AG04449 (cell line): ENCODE measurements at regions of chr11 and their contacts with region 1.

Region 1: GRCh38 chr11:78645226-78646202 is 70.8 kb upstream of the NARS2 start:
- DNase-seq: no peak
- H3K4me3 ChIP-seq: no peak overlapping the region
- CTCF ChIP-seq: peak; percentile 91

Region 2: DNA sequence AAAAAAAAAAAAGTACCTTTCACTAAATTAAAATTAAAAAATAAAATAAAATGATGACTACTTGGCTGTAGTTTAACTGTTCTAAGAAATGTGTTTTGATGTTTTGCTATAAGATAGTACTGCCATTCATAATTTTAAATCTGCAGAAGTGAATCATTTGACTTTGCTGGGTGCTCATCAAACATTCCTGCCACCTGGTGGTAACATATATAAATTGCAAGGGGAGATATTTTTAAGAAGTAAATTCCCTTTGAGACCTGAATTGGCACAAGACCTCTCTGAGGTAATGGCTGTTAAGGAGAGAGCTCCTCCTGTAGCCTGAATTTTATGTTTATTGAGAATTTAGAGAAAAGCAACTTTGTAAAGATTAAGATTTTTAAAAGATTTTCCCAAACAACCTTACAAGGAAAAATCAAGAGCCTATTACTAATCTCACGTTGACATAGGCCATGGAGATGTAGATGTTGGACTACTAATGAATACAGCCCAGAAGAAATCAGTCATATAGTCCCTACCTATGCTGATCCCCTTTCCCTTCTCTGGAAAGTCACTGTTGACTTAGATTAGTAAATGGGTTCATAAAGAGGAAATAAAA is 59.0 kb before region 1 on chr11:
- CTCF ChIA-PET with region 1: no interaction called
- POLR2A ChIA-PET with region 1: no interaction called
- DNase-seq: no peak
- H3K4me3 ChIP-seq: no peak overlapping the region
- CTCF ChIP-seq: peak; percentile 11

Region 3: DNA sequence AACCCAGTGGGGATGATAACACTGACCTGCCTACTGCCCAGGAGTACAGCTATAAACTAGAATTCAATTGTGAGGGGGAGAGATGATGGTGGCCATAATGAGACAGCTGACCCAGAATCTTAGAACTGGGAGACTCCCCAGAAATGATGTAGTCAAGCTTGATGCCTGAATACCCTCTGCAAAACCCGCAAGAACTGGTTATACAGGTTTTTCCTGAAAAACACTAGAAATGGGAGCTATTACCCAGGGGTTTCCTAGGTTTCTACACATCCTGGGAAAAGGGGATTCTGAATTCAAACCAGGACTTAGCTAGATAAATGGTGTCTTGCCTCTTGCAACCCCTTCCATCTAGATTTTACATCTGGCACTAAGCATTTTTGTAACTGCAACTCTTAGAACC is 43.0 kb after region 1 on chr11:
- CTCF ChIA-PET with region 1: interaction called, 23 read pairs
- POLR2A ChIA-PET with region 1: no interaction called
- DNase-seq: no peak
- H3K4me3 ChIP-seq: no peak overlapping the region
- CTCF ChIP-seq: no peak

Region 4: GRCh38 chr11:78791254-78791653 is 145.7 kb after region 1 on chr11:
- CTCF ChIA-PET with region 1: interaction called, 33 read pairs
- POLR2A ChIA-PET with region 1: no interaction called
- DNase-seq: no peak
- H3K4me3 ChIP-seq: no peak overlapping the region
- CTCF ChIP-seq: no peak

Region 5: GRCh38 chr11:78902771-78903507 is 257.4 kb after region 1 on chr11:
- CTCF ChIA-PET with region 1: interaction called, 17 read pairs
- POLR2A ChIA-PET with region 1: no interaction called
- DNase-seq: no peak
- H3K4me3 ChIP-seq: no peak overlapping the region
- CTCF ChIP-seq: no peak

Region 6: GRCh38 chr11:79045800-79046304 is 400.3 kb after region 1 on chr11:
- CTCF ChIA-PET with region 1: interaction called, 45 read pairs
- POLR2A ChIA-PET with region 1: no interaction called
- DNase-seq: no peak
- H3K4me3 ChIP-seq: no peak overlapping the region
- CTCF ChIP-seq: no peak

Region 7: DNA sequence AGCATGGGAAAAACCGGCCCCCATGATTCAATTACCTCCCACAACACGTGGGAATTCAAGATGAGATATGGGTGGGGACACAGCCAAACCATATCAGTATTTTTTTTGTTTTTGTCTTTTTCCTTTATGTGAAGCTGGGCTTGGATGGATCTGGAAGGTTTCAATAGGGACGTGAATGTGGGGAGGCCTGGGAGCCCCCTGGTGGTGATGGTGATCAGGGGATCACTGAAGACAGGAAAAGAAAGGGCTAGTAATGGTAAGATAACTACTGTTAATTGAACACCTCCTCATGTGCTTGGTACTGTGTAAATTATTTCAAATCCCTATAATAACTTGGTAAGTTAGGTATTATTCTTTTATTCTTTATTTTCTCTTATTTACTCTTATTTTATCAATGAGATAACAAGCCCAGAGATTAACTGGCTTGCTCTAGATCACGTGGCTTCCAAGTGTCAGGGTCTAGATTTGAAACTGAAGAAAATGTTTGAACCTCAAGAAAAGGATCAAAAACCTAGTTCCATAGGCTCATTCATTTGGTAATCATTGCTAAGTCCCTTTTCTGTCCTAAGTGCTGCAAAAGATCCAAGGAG is 431.1 kb after region 1 on chr11:
- CTCF ChIA-PET with region 1: interaction called, 24 read pairs
- POLR2A ChIA-PET with region 1: no interaction called
- DNase-seq: no peak
- H3K4me3 ChIP-seq: no peak overlapping the region
- CTCF ChIP-seq: peak; percentile 52

Region 8: DNA sequence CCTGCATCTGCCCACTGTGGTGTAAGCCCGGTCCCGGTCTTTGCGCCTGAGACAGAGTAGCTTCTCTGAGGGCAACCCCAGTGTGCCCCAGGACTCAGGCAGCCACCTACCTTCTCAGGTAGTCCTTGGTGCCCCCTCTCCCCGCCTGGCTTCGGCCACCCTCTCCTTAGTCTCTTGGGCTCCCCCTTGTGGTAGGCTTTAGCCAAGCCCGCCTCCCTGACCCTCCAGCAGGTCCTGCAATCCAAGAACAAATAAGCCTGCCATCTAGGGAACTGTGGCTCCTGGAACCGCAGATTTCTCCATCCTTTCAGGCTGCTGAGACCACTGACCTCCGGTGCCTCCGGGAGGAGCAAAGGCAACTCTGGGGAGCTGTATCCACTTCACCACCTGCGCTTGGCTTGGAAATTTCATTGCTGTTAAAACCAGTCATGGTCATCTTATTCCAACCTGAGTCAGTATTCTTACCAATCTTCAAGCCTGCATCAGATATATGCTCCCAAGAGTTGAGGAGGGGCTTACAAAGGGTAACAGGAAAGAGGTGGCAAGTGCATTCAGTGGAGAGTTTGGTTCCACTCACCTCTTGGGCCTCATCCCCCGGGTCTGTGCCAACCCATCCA is 848.1 kb after region 1 on chr11:
- CTCF ChIA-PET with region 1: interaction called, 81 read pairs
- POLR2A ChIA-PET with region 1: no interaction called
- DNase-seq: no peak
- H3K4me3 ChIP-seq: no peak overlapping the region
- CTCF ChIP-seq: peak; percentile 96